HAP-1 (cell line): ENCODE measurements at regions of chr19 and their contacts with region 1.

Region 1: GRCh38 chr19:46076951-46077816 is 36.4 kb upstream of the IGFL4 start:
- DNase-seq: peak; percentile 88
- H3K4me3 ChIP-seq: peak overlapping the region; percentile 31
- H3K4me1 ChIP-seq: no peaks in the 10 kb centered on the region
- H3K27me3 ChIP-seq: peaks cover 35% of the 10 kb centered on the region

Region 2: GRCh38 chr19:45577111-45577905 is 499.9 kb before region 1 on chr19:
- in situ Hi-C with region 1: no loop called
- DNase-seq: no peak
- H3K4me3 ChIP-seq: no peak overlapping the region
- H3K4me1 ChIP-seq: no peaks in the 10 kb centered on the region
- H3K27me3 ChIP-seq: no peaks in the 10 kb centered on the region

Region 3: DNA sequence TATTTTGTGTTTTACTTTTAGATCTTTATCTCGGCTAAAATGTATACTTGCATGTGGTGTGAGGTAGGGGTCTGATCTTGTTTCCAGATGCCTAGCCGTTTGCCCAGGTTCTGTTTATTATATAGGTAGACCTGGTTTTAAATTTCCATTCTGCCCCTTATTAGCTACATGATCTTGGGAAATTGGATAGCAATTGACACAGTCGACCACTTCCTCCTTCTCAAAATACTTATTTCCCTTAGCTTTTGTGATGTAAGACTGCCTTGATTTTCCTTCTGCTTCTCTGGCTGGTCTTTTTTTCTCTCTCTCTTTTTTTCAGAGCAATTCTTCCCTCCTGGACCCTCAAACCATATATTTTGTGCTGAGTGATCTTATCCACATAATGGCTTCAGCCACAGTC is 51.3 kb before region 1 on chr19:
- in situ Hi-C with region 1: loop called (anchors 5 kb)
- DNase-seq: no peak
- H3K4me3 ChIP-seq: no peak overlapping the region
- H3K4me1 ChIP-seq: no peaks in the 10 kb centered on the region
- H3K27me3 ChIP-seq: no peaks in the 10 kb centered on the region

Region 4: DNA sequence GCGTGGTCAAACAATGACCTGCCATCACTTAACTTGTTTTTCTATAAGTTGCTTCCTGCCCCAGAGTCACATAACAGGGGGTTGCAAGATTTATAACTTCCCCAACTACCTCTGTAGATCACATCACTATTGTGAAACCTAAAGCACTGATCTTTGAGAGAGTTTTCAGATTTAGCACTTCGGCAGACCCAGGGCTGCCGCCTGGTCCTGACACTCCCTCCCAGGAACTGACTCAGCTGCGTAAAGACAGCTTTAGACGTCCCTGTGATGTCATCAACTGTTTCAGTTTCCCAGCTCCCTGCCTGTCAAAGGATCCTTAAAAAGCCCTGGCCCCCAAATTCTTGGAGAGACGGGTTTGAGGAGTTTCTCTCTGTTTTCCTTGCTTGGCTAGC is 104.2 kb after region 1 on chr19:
- in situ Hi-C with region 1: loop called (anchors 10 kb)
- DNase-seq: no peak
- H3K4me3 ChIP-seq: no peak overlapping the region
- H3K4me1 ChIP-seq: no peaks in the 10 kb centered on the region
- H3K27me3 ChIP-seq: peaks cover 23% of the 10 kb centered on the region; the same call in 1 of the 2 replicates

Region 5: GRCh38 chr19:46265217-46265828 is 188.1 kb after region 1 on chr19:
- in situ Hi-C with region 1: loop called (anchors 5 kb)
- DNase-seq: peak; percentile 75 to 84
- H3K4me3 ChIP-seq: no peak overlapping the region
- H3K4me1 ChIP-seq: peaks cover under 1% of the 10 kb centered on the region
- H3K27me3 ChIP-seq: no peaks in the 10 kb centered on the region